ENCODE measurements at regions of chr10 and their contacts with region 1.

Region 1: DNA sequence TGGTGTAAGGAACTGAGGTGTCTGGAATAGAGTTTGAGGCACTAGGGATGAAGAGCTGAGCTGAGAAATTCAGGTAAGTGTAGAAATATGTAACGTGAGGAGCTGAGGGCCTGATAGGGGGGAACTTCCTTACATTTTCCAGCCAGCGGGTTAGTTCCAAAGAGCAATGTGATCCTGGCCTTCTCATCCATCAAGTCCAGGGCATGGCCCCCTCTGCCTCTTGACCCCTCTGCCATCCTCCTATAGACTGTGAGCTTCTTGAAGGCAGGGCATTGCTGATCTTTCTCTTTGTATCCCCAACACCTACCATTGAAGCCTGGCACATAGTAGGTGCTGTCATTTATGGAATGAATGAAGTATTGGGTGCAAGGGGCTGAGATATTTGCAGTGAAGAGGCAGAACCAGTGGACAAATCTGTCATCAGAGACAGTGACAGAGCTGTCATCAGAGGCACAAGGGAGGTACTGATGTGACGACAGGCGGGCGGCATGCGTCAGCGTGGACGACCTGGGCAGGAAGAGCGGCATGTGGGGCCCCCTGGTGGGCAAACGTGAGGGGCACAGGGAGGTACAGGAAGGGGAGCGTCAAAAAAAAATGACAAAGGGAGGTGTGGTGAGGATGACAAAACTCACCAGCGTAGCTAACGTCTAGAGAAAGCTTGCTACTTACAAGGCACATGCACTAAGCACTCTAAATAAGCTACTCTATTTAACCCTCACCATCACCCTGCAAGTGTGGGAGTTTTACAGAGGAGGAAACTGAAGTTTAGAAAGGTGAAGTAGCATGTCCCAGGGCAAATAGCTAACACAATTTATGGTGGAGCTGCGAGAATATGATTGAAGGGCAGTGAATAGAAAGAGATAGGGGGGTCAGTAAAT is 5.2 kb upstream of the CAMK2G start:
- DNase-seq: peak; percentile 80
- H3K4me3 ChIP-seq: no peak overlapping the region
- H3K27ac ChIP-seq: no peak overlapping the region
- H3K4me1 ChIP-seq: peaks cover 29% of the 10 kb centered on the region
- H3K27me3 ChIP-seq: no peaks in the 10 kb centered on the region
- CTCF ChIP-seq: peak; percentile 93 to 94

Region 2: GRCh38 chr10:73843271-73843670 is 36.3 kb before region 1 on chr10:
- CTCF ChIA-PET with region 1: interaction called, 6 read pairs
- dilution Hi-C with region 1: loop called (anchors 5 kb)
- in situ Hi-C with region 1: no loop called
- intact Hi-C with region 1: no loop called
- DNase-seq: no peak
- H3K4me3 ChIP-seq: no peak overlapping the region
- H3K27ac ChIP-seq: no peak overlapping the region
- H3K4me1 ChIP-seq: peaks cover 8% of the 10 kb centered on the region
- H3K27me3 ChIP-seq: no peaks in the 10 kb centered on the region
- CTCF ChIP-seq: no peak

Region 3: DNA sequence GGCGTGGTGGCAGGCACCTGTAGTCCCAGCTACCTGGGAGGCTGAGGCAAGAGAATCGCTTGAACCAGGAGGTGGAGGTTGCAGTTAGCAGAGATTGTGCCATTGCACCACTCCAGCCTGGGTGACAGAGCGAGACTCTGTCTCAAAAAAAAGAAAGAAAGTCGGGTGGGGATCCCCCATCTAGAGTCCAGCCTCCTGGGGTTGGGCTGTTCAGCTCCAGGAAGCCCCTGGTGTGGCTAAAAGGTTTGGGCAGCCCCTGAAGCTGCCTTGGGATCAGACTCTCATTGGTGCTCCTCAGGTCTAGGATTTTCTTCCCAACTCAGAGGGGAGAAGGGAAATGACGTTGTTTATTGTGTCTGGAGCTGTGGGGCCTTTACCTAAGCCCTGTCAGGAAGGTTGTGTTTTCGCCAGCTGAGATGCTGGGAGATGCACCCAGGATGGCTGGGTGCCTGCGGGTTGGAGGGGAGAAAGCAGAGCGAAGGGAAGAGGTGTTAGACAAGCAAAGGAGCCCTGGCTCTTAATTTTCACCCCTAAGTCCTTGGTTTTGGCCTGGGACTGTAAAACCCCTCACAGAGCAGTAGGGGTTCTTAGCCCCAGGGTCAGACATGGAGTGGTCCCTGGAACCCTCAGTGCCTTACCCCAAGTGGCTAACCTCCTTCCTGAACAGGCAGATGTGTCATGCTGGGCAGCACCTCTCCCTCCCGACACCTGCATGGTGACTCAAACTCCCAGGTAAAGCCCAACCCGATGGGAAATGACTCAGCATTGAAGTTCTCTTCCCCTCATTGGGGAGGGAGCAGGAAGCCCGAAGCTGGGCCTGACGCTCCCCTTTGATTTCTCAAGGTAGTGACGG is 52.5 kb after region 1 on chr10:
- CTCF ChIA-PET with region 1: no interaction called
- dilution Hi-C with region 1: no loop called
- in situ Hi-C with region 1: no loop called
- intact Hi-C with region 1: no loop called
- DNase-seq: peak; percentile 100
- H3K4me3 ChIP-seq: no peak overlapping the region
- H3K27ac ChIP-seq: peak overlapping the region; percentile 91
- H3K4me1 ChIP-seq: peaks cover 19% of the 10 kb centered on the region
- H3K27me3 ChIP-seq: no peaks in the 10 kb centered on the region
- CTCF ChIP-seq: no peak